ENCODE measurements at regions of chr12 and their contacts with region 1.

Region 1: GRCh38 chr12:56521590-56522371 is at the start of gene RBMS2:
- DNase-seq: peak; percentile 82
- total RNA-seq, gene RBMS2: 23.0 TPM

Region 2: DNA sequence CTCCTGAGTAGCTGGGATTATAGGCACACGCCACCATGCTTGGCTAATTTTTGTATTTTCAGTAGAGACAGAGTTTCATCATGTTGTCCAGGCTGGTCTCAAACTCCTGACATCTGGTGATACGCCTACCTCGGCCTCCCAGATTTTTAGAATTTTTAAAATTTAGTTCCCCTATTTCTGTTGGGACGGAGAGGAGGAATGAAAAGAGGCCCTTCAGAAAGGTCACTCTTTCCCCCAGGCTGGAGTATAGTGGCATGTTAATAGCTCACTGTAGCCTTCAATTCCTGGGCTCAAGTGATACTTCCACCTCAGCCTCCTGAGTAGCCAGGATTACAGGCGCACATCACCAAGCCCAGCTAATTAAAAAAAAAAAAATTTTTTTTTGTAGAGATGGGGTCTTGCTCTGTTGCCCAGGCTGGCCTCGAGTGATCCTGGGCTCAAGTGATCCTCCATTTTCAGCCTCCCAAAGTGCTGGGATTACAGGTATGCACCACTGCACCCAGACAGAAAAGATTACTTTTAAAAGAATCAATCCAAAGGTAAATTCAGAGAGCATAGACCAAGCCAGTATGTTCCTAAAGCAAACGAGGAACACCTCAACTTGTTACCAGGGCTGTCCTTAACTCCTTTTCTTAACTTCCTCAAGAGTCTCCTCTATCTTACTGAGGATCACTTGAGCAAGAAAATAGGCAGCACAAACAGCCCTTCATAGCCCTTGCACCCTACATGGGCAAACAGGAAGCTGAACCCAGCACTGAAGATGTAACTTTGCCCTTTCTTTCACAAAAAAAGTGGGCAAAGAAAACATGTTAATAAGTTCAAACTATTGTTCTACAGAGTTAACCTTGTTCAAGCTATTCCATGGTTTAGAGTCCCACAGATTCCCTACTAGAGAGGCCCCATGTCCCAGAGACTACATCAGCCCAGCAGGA is 233.1 kb before region 1 on chr12:
- intact Hi-C with region 1: no loop called
- DNase-seq: no peak

Region 3: DNA sequence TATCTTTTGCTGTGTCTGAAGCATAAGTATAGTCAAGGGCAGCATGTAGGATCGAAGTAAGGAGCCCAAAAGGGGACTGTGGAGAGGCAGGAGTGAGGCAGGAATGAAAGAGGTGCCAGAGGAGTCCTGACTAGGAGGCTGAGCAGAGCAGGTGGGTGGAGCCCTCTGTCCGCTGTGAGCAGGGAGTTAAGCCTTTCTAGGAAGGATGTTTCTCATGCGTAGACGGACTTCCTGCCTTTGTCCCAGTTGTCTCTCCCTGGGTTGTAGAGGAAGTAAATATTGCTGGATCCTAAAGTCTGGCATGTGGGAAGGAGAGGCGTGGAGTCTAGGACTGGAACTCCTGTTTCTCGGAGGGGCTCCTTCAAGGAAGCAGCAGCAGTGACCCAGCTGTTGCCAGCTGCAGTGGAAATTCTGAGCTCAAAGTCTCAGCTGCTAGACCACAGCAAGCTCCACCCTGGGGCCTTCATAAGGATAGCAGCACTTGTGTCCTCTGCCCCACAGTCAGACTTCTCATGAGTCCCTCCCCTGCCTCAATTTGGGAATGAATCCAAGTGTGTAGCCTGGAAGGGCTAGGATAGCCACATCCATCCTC is 43.8 kb after region 1 on chr12:
- intact Hi-C with region 1: loop called (anchors 1 kb)
- DNase-seq: peak; percentile 88

Region 4: DNA sequence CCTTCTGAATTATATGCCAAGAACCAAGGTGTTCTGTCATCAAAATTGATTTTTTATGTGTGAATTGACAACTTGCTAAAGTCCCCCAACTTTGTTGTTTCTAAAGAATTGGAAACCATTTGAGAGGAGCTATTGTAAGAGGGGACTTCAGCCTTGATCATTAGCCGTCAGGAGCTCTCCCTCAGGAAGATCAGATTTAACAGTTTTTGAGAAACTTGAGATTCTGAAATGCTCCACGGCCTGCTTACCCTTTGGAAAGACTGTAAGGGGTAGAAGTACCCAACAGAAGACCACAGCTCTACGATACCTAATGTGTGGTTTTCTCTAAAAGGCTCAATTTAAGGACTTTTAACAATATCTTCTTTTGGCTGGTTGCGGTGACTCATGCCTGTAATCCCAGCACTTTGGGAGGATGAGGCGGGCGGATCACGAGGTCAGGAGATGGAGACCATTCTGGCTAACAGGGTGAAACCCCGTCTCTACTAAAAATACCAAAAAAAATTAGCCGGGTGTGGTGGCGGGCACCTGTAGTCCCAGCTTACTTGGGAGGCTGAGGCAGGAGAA is 57.3 kb after region 1 on chr12:
- intact Hi-C with region 1: no loop called
- DNase-seq: no peak